ENCODE measurements at regions of chr18 and their contacts with region 1.

Region 1: GRCh38 chr18:30376515-30376914 is 666.0 kb downstream of the DSC3 start:
- DNase-seq: peak; percentile 22
- ATAC-seq: peak; percentile 59; the same call in 1 of the 2 replicates
- H3K4me3 ChIP-seq: no peak overlapping the region
- H3K27ac ChIP-seq: no peak overlapping the region
- H3K4me1 ChIP-seq: no peaks in the 10 kb centered on the region
- H3K27me3 ChIP-seq: no peaks in the 10 kb centered on the region
- CTCF ChIP-seq: peak in 2 of 3 experiments; percentile 39 to 56; a peak in 4 of 6 replicates
- POLR2A ChIP-seq: no peak
- RAD21 ChIP-seq: peak; percentile 39

Region 2: GRCh38 chr18:30106356-30106755 is 270.2 kb before region 1 on chr18:
- CTCF ChIA-PET with region 1: no interaction called
- POLR2A ChIA-PET with region 1: no interaction called
- RAD21 ChIA-PET with region 1: no interaction called
- intact Hi-C with region 1: no loop called
- DNase-seq: no peak
- ATAC-seq: no peak
- H3K4me3 ChIP-seq: no peak overlapping the region
- H3K27ac ChIP-seq: no peak overlapping the region
- H3K4me1 ChIP-seq: no peaks in the 10 kb centered on the region
- H3K27me3 ChIP-seq: no peaks in the 10 kb centered on the region
- CTCF ChIP-seq: no peak
- POLR2A ChIP-seq: no peak
- RAD21 ChIP-seq: no peak

Region 3: DNA sequence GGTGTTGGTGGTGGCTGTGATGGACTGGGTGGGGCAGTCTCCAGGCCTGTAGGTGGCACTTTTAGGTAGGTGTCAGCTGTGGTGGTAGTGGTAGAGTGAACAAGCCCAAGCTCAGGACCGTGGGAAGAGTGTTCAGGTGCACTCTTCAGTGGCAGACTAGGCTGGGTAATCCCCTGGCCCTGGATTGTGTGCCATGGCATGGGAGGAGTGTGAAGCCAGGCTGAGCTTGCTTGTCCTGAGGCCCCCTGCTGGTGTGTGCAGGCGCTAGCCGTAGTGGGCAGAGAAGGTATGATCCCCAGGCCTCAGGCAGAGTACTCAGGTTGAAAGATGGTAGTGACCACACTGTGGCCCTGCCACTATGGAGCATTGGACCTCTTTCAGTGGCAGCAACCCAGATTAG is 184.3 kb before region 1 on chr18:
- CTCF ChIA-PET with region 1: no interaction called
- POLR2A ChIA-PET with region 1: no interaction called
- RAD21 ChIA-PET with region 1: no interaction called
- intact Hi-C with region 1: no loop called
- DNase-seq: no peak
- ATAC-seq: peak; percentile 60; the same call in 1 of the 2 replicates
- H3K4me3 ChIP-seq: no peak overlapping the region
- H3K27ac ChIP-seq: no peak overlapping the region
- H3K4me1 ChIP-seq: no peaks in the 10 kb centered on the region
- H3K27me3 ChIP-seq: no peaks in the 10 kb centered on the region
- CTCF ChIP-seq: peak in 2 of 3 experiments; percentile 22 to 27; a peak in 2 of 6 replicates
- POLR2A ChIP-seq: no peak
- RAD21 ChIP-seq: no peak

Region 4: GRCh38 chr18:30889519-30890301 is 513.2 kb after region 1 on chr18:
- CTCF ChIA-PET with region 1: interaction called, 11 read pairs
- POLR2A ChIA-PET with region 1: no interaction called
- RAD21 ChIA-PET with region 1: no interaction called
- intact Hi-C with region 1: no loop called
- DNase-seq: peak; percentile 23
- ATAC-seq: peak; percentile 61; the same call in 1 of the 2 replicates
- H3K4me3 ChIP-seq: no peak overlapping the region
- H3K27ac ChIP-seq: no peak overlapping the region
- H3K4me1 ChIP-seq: no peaks in the 10 kb centered on the region
- H3K27me3 ChIP-seq: no peaks in the 10 kb centered on the region
- CTCF ChIP-seq: peak; percentile 21 to 53 (median 23); a peak in 4 of 6 replicates
- POLR2A ChIP-seq: no peak
- RAD21 ChIP-seq: peak; percentile 58